ENCODE measurements at regions of chr10 and their contacts with region 1.

Region 1: GRCh38 chr10:70493660-70494234 is 15.2 kb downstream of the PALD1 start:
- DNase-seq: peak; percentile 97
- H3K4me3 ChIP-seq: peak overlapping the region; percentile 64
- H3K27ac ChIP-seq: peak overlapping the region; percentile 98
- H3K4me1 ChIP-seq: peaks cover 99% of the 10 kb centered on the region
- CTCF ChIP-seq: no peak

Region 2: DNA sequence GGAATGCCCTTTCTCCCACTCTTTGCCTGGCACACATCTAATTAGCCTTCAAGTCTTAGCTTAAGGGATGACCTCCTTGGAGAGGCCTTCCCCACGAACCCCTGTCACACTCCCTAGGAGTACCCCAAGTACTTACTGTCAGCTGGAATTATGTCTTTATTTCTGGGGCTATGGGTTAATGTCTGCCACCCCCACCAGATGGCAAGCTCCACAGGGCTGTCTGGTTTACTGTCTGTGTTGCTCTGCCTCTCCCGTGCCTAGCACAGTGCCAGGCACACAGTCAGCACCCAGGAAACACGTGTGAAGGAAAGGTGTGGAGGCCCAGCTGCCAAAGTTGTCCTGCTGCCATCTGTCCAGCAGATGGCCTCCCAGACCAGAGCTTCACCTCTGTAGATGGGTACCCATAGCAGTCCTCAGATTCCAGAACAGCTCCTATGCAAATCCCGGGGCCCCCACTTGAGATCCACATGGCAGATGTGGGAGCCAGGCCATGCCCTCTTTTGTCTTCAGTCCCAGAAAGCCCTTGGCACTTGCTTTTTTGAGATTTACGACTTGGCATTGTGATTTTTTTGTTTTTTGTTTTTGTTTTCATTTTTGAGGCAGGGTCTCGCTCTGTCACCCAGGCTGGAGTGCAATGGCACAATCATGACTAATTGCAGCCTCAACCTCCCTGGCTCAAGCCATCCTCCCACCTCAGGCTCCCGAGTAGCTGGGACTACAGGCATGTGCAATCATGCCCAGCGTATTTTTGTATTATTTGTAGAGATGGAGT is 32.3 kb before region 1 on chr10:
- CTCF ChIA-PET with region 1: interaction called, 3 read pairs
- POLR2A ChIA-PET with region 1: interaction called, 3 read pairs
- intact Hi-C with region 1: loop called (anchors 1 kb)
- DNase-seq: peak; percentile 74
- H3K4me3 ChIP-seq: no peak overlapping the region
- H3K27ac ChIP-seq: no peak overlapping the region
- H3K4me1 ChIP-seq: no peaks in the 10 kb centered on the region
- CTCF ChIP-seq: peak; percentile 92

Region 3: GRCh38 chr10:70478191-70479164 is 15.3 kb before region 1 on chr10 and contains the start of gene PALD1:
- CTCF ChIA-PET with region 1: interaction called, 4 read pairs
- POLR2A ChIA-PET with region 1: interaction called, 35 read pairs
- intact Hi-C with region 1: loop called (anchors 1 kb)
- DNase-seq: peak; percentile 81
- H3K4me3 ChIP-seq: peak within 1 kb of the TSS; percentile 95
- H3K27ac ChIP-seq: peak within 1 kb of the TSS; percentile 74
- H3K4me1 ChIP-seq: peaks cover 62% of the 10 kb centered on the region
- CTCF ChIP-seq: no peak
- total RNA-seq, gene PALD1: 41.6 and 52.7 TPM in 2 replicates

Region 4: GRCh38 chr10:70508912-70509756 is 15.4 kb after region 1 on chr10:
- CTCF ChIA-PET with region 1: interaction called, 7 read pairs
- POLR2A ChIA-PET with region 1: interaction called, 29 read pairs
- intact Hi-C with region 1: loop called (anchors 1 kb)
- DNase-seq: peak; percentile 83
- H3K4me3 ChIP-seq: peak overlapping the region; percentile 6
- H3K27ac ChIP-seq: peak overlapping the region; percentile 54
- H3K4me1 ChIP-seq: peaks cover 79% of the 10 kb centered on the region
- CTCF ChIP-seq: no peak